OCI-LY7 (cell line): ENCODE measurements at regions of chr9 and their contacts with region 1.

Region 1: GRCh38 chr9:105713260-105714019 is 19.1 kb downstream of the TMEM38B start:
- DNase-seq: no peak
- H3K4me3 ChIP-seq: no peak overlapping the region
- H3K27ac ChIP-seq: no peak overlapping the region
- H3K4me1 ChIP-seq: no peaks in the 10 kb centered on the region
- CTCF ChIP-seq: no peak

Region 2: GRCh38 chr9:105608721-105609598 is 104.5 kb before region 1 on chr9:
- CTCF ChIA-PET with region 1: interaction called, 3 read pairs
- POLR2A ChIA-PET with region 1: no interaction called
- intact Hi-C with region 1: loop called (anchors 1 kb)
- DNase-seq: peak; percentile 75
- H3K4me3 ChIP-seq: no peak overlapping the region
- H3K27ac ChIP-seq: no peak overlapping the region
- H3K4me1 ChIP-seq: no peaks in the 10 kb centered on the region
- CTCF ChIP-seq: peak; percentile 92

Region 3: DNA sequence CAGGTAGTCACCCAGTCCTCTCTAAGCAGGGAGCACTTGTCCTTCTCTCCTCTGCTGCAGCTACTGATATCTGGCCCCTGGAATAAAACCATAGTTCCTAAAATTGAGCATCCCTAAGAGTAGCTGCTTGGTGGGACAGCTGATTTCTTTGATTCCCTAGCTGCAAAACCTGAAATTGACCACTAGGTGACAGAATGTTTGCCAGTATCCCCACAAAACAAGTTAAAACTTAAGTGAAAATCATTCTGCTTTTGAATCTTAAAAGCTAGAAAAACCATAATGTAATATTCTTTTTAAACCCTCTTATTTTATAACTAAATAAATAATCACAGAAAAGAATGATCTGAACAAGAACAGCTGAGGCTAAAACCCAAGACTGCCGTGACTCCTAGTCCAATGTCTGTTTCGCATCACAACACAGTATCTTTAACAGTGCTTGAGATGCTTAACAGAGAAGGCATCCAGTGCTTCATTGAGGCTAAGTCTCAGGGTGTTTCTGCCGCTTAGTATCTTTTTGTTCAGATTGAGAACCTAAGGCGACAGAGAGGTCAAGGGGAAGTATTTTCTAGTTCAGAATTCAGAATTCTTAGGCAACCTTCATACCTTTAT is 75.5 kb before region 1 on chr9:
- CTCF ChIA-PET with region 1: no interaction called
- POLR2A ChIA-PET with region 1: interaction called, 3 read pairs
- intact Hi-C with region 1: loop called (anchors 1 kb)
- DNase-seq: peak; percentile 13
- H3K4me3 ChIP-seq: no peak overlapping the region
- H3K27ac ChIP-seq: no peak overlapping the region
- H3K4me1 ChIP-seq: no peaks in the 10 kb centered on the region
- CTCF ChIP-seq: peak; percentile 86